Prostate gland (tissue), 2 donors: ENCODE measurements at regions of chr2 and their contacts with region 1.

Region 1: DNA sequence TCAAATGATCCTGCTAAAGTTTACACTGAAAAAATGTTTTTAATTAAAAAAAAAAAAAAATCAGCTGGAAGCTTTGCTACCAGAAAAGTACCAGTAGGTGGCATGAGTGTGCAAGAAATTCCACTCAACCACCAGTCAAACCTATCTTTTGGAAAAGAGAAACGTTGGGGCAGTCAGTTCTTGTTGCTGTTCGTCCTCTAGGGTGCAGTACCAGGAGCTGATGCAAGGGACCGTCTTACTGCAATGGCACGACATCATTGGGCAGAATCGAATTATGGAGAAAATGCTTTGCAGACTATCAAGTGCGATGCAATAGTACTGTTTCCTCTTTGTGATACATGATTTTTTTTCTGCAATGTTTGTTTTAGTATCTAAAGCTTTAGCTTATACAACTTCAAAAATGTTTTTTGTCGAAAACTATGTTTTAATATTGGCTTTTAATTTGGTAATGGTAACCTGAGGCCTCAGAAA is 18.3 kb downstream of the YPEL5 start:
- DNase-seq: peak; percentile 46
- H3K4me3 ChIP-seq: no peak overlapping the region
- H3K27ac ChIP-seq: no peak overlapping the region
- H3K4me1 ChIP-seq: no peaks in the 10 kb centered on the region
- H3K27me3 ChIP-seq: no peaks in the 10 kb centered on the region
- CTCF ChIP-seq: peak; percentile 61 to 79 (median 71)
- POLR2A ChIP-seq: no peak

Region 2: GRCh38 chr2:30026087-30027055 is 138.7 kb before region 1 on chr2:
- intact Hi-C with region 1: no loop called
- DNase-seq: peak; percentile 19
- H3K4me3 ChIP-seq: no peak overlapping the region
- H3K27ac ChIP-seq: no peak overlapping the region
- H3K4me1 ChIP-seq: no peaks in the 10 kb centered on the region
- H3K27me3 ChIP-seq: no peaks in the 10 kb centered on the region
- CTCF ChIP-seq: peak in 3 of 4 experiments; percentile 45 to 57 (median 54)
- POLR2A ChIP-seq: no peak

Region 3: GRCh38 chr2:30127016-30127893 is 37.8 kb before region 1 on chr2:
- intact Hi-C with region 1: no loop called
- DNase-seq: no peak
- H3K4me3 ChIP-seq: no peak overlapping the region
- H3K27ac ChIP-seq: no peak overlapping the region
- H3K4me1 ChIP-seq: no peaks in the 10 kb centered on the region
- H3K27me3 ChIP-seq: no peaks in the 10 kb centered on the region
- CTCF ChIP-seq: no peak
- POLR2A ChIP-seq: no peak

Region 4: DNA sequence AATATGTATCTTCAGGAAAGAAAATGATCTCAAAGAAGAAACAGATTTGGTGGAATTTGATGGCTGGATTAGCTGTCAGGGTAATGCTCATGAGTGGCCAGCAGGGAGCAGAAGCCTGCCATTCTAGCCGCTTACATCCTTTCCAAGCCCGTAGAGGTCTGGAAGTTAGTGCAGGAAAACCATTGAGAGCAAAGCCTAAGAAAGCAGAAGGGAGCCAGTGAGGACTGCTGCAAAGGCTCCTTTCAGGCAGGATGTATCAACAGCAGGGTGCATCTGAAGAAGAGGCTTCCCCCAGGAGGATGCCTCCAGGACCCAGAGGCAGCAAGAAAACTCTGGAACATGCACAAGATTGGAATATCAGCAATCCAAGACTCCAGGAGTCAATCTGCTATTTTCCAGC is 43.4 kb after region 1 on chr2:
- intact Hi-C with region 1: loop called (anchors 5 kb)
- DNase-seq: peak; percentile 62
- H3K4me3 ChIP-seq: no peak overlapping the region
- H3K27ac ChIP-seq: no peak overlapping the region
- H3K4me1 ChIP-seq: no peaks in the 10 kb centered on the region
- H3K27me3 ChIP-seq: no peaks in the 10 kb centered on the region
- CTCF ChIP-seq: peak; percentile 76 to 92 (median 90)
- POLR2A ChIP-seq: no peak

Region 5: DNA sequence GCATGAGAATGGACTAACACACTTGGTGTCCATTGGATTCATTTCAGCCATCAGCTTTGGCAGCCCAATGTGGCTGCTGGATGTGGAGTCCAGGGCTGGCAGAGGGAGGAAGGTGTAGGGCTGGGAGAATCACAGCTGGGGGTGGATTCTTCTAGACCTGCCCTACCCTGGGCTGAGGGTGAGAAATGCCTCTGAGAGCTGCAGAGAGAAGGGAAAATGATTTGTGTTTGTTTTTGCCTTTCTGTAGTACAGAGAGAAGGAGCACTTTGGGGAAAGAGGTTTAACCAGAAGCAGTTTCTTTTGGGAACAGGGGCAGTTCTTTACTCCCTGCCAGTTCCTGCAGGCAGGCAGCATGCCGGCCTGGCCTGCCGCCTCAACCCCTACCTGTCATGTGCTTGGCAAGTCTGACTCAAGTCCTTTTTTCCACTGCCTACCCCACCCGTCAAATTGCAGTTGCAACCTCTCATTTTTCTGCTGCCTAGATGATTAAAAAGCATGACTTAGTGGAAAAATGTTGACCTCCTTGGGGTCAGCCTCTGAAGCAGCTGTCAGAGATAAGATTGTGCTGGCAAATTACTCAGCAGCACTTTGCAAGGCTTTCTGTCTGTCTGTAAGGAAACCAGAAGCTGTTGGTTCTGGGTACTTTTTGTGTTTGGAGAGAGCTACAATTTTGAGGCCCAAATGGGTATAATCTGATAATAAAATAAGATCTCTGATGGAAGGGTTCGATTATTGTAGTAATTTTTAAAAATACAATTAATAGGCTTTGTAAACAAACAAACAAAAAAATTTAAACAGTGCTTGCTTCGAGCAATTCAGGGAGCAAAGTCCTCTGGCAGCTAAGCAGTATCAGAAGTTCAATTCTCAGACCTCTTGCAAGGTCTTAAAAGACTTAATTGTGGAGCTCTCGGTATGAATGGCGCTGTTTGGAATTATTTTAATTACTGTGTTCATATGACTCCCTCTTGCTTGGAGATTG is 87.9 kb after region 1 on chr2:
- intact Hi-C with region 1: no loop called
- DNase-seq: peak; percentile 39
- H3K4me3 ChIP-seq: no peak overlapping the region
- H3K27ac ChIP-seq: no peak overlapping the region
- H3K4me1 ChIP-seq: peaks cover 3% of the 10 kb centered on the region
- H3K27me3 ChIP-seq: no peaks in the 10 kb centered on the region
- CTCF ChIP-seq: no peak
- POLR2A ChIP-seq: no peak

Region 6: DNA sequence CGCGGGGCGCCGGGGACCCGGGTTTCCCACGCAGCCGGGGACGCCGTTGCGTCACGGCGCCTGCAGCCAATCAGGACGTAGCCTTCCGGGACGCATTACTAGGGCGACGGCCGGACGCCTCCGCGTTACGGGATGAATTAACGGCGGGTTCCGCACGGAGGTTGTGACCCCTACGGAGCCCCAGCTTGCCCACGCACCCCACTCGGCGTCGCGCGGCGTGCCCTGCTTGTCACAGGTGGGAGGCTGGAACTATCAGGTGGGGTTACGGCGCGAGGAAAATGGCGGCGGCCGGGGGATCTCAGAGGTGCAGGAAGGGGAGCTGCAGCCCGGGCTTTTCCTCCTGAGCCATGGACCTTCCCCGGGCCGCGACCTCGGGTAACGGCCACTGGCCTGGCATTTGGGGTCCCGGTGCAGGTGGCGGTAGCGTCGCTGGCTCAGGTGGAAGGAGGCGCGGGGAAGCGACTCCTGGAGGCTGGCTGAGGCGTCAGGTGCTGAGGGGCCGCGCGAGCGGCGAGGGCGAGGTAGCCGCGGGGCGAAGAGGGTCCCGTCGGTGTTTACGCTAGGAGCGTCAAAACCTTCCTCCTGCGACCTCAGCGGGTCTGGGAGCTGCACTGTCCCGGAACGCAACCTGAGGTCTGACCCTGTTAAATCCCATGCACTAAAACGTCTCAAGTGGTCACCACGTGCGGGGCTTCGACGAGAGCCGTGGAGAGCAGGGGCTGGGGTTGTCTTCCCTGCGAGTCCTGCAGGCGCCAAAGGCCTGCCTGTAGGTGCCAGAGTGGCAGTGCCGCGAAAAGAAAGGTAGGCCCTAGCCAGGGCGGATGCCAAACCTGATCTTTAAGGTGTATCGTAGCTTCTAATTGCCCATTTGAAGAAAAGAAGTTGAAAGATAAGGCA is 282.3 kb after region 1 on chr2 and contains the start of gene LCLAT1:
- intact Hi-C with region 1: loop called (anchors 10 kb)
- DNase-seq: peak; percentile 73
- H3K4me3 ChIP-seq: peak within 1 kb of the TSS; percentile 87
- H3K27ac ChIP-seq: peak within 1 kb of the TSS; percentile 67 to 69
- H3K4me1 ChIP-seq: no peaks in the 10 kb centered on the region
- H3K27me3 ChIP-seq: no peaks in the 10 kb centered on the region
- CTCF ChIP-seq: no peak
- POLR2A ChIP-seq: no peak
- total RNA-seq, gene LCLAT1: 18.8 to 28.2 TPM

Region 7: DNA sequence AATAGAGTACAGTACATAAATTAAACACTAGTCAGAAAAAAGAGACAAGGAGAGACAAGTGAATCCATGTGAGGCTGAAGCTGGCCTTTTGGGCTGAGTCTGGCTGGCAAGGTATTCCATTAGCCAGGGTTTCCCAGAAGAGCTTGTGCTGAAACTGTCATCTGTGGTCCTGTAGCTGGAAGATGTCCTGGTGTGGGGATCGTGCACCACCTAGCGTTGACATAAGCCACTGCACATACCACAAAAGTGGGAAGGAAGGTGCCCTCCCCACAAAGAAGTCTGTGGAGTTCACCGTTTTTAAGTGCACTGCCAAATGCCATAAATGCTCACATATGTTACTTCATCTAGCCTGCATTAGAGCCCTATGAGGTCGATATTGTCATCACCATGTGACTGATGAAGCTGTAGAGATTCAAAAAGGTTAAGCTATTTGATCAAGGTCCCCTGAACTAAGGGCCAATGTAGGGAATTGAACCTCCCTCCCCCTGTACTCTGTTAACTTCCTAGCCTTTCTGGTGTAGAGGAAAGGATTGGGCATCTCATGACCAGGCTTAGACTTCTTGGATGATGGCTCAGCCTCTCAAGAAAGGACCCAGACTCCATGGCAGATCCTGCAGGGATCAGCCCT is 1005.1 kb after region 1 on chr2:
- intact Hi-C with region 1: loop called (anchors 10 kb)
- DNase-seq: peak; percentile 41
- H3K4me3 ChIP-seq: no peak overlapping the region
- H3K27ac ChIP-seq: no peak overlapping the region
- H3K4me1 ChIP-seq: no peaks in the 10 kb centered on the region
- H3K27me3 ChIP-seq: no peaks in the 10 kb centered on the region
- CTCF ChIP-seq: peak; percentile 58 to 92 (median 85)
- POLR2A ChIP-seq: no peak

Region 8: GRCh38 chr2:31333527-31334183 is 1168.6 kb after region 1 on chr2:
- intact Hi-C with region 1: loop called (anchors 10 kb)
- DNase-seq: peak; percentile 89
- H3K4me3 ChIP-seq: no peak overlapping the region
- H3K27ac ChIP-seq: peak overlapping the region in 1 of 2 donors; percentile 7
- H3K4me1 ChIP-seq: no peaks in the 10 kb centered on the region
- H3K27me3 ChIP-seq: peaks cover 2% of the 10 kb centered on the region
- CTCF ChIP-seq: peak; percentile 64 to 95 (median 89)
- POLR2A ChIP-seq: no peak